ENCODE measurements at regions of chr3 and their contacts with region 1.

Region 1: GRCh38 chr3:164687211-164687610 is 391.1 kb downstream of the SI start:
- DNase-seq: no peak
- H3K4me3 ChIP-seq: no peak overlapping the region
- H3K27ac ChIP-seq: no peak overlapping the region
- H3K4me1 ChIP-seq: no peaks in the 10 kb centered on the region
- H3K27me3 ChIP-seq: no peaks in the 10 kb centered on the region
- CTCF ChIP-seq: no peak

Region 2: GRCh38 chr3:164486150-164486549 is 201.1 kb before region 1 on chr3:
- CTCF ChIA-PET with region 1: no interaction called
- POLR2A ChIA-PET with region 1: no interaction called
- intact Hi-C with region 1: loop called (anchors 1 kb)
- DNase-seq: no peak
- H3K4me3 ChIP-seq: no peak overlapping the region
- H3K27ac ChIP-seq: no peak overlapping the region
- H3K4me1 ChIP-seq: no peaks in the 10 kb centered on the region
- H3K27me3 ChIP-seq: no peaks in the 10 kb centered on the region
- CTCF ChIP-seq: no peak

Region 3: GRCh38 chr3:164673738-164674137 is 13.5 kb before region 1 on chr3:
- CTCF ChIA-PET with region 1: no interaction called
- POLR2A ChIA-PET with region 1: no interaction called
- intact Hi-C with region 1: loop called (anchors 1 kb)
- DNase-seq: no peak
- H3K4me3 ChIP-seq: no peak overlapping the region
- H3K27ac ChIP-seq: no peak overlapping the region
- H3K4me1 ChIP-seq: no peaks in the 10 kb centered on the region
- H3K27me3 ChIP-seq: no peaks in the 10 kb centered on the region
- CTCF ChIP-seq: peak; percentile 32; the same call in 1 of the 2 replicates

Measured in PC-9 (cell line).